ENCODE measurements at regions of chr12 and their contacts with region 1.

Region 1: GRCh38 chr12:104108755-104109445 is 29.1 kb downstream of the NFYB start:
- DNase-seq: peak; percentile 81 to 96 (median 87)
- H3K4me3 ChIP-seq: no peak overlapping the region
- H3K27ac ChIP-seq: peak overlapping the region in 1 of 5 donors; percentile 7
- H3K4me1 ChIP-seq: peaks cover 0 to 42% of the 10 kb centered on the region in 2 donors
- H3K27me3 ChIP-seq: no peaks in the 10 kb centered on the region
- CTCF ChIP-seq: peak; percentile 69 to 95 (median 82)
- POLR2A ChIP-seq: peak in 1 of 2 donors; percentile 18

Region 2: GRCh38 chr12:103947871-103948555 is 160.9 kb before region 1 on chr12:
- intact Hi-C with region 1: loop called in 1 of 2 experiments (anchors 10 kb)
- DNase-seq: peak in 4 of 7 donors; percentile 48 to 68 (median 60)
- H3K4me3 ChIP-seq: no peak overlapping the region
- H3K27ac ChIP-seq: peak overlapping the region in 2 of 5 donors; percentile 2 to 50
- H3K4me1 ChIP-seq: no peaks in the 10 kb centered on the region
- H3K27me3 ChIP-seq: no peaks in the 10 kb centered on the region
- CTCF ChIP-seq: no peak
- POLR2A ChIP-seq: no peak

Region 3: DNA sequence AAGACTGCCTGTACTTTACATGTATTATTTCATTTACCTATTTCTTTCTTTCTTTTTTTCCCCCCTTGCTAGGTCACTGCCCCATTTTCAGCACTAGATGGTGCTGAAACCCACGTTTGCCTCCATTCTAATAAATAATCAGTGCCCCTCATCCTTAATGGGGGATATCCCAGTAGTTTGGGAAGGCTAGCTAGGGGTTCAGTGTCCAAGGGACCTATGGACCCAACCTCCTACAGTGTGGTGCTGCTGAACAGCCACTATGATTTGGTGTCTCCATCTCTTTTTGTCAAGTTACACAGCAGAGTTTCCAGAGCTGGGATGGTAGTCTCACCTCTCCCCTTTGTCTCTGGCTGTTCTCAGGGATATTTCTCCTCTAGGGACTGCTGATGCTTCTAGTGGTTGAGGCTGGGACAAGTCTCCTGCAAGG is 51.1 kb before region 1 on chr12:
- intact Hi-C with region 1: loop called (anchors 10 kb)
- DNase-seq: no peak
- H3K4me3 ChIP-seq: no peak overlapping the region
- H3K27ac ChIP-seq: no peak overlapping the region
- H3K4me1 ChIP-seq: peaks cover 0 to 12% of the 10 kb centered on the region in 2 donors
- H3K27me3 ChIP-seq: no peaks in the 10 kb centered on the region
- CTCF ChIP-seq: peak; percentile 38 to 74 (median 58)
- POLR2A ChIP-seq: no peak

Region 4: DNA sequence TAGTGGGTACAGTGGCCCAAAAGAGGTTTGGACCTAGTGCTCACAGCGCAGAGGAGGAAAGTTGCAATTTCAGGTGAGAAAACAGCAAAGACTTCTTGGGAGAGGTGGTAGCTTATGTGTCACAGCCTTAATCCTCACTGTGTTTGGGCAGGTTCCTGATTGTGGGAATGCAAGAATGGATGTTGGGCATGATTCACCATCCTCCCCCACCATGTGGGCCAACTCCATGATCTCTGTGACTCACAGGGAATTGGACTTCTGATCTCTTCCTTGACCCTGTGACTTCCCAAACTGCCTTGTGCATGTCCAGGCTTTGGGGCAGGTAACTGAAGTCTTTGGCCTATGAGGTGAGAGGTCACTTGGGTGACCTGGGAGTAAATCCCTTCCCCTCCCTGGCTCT is 346.1 kb after region 1 on chr12:
- intact Hi-C with region 1: no loop called
- DNase-seq: peak in 2 of 7 donors; percentile 19 to 25
- H3K4me3 ChIP-seq: no peak overlapping the region
- H3K27ac ChIP-seq: no peak overlapping the region
- H3K4me1 ChIP-seq: peaks cover 4 to 18% of the 10 kb centered on the region in 2 donors
- H3K27me3 ChIP-seq: no peaks in the 10 kb centered on the region
- CTCF ChIP-seq: no peak
- POLR2A ChIP-seq: no peak

Measured in adrenal gland (tissue), 19 donors.